ENCODE measurements at regions of chr2 and their contacts with region 1.

Region 1: GRCh38 chr2:26002632-26003310 is 20.5 kb upstream of the KIF3C start:
- DNase-seq: no peak
- CTCF ChIP-seq: no peak

Region 2: DNA sequence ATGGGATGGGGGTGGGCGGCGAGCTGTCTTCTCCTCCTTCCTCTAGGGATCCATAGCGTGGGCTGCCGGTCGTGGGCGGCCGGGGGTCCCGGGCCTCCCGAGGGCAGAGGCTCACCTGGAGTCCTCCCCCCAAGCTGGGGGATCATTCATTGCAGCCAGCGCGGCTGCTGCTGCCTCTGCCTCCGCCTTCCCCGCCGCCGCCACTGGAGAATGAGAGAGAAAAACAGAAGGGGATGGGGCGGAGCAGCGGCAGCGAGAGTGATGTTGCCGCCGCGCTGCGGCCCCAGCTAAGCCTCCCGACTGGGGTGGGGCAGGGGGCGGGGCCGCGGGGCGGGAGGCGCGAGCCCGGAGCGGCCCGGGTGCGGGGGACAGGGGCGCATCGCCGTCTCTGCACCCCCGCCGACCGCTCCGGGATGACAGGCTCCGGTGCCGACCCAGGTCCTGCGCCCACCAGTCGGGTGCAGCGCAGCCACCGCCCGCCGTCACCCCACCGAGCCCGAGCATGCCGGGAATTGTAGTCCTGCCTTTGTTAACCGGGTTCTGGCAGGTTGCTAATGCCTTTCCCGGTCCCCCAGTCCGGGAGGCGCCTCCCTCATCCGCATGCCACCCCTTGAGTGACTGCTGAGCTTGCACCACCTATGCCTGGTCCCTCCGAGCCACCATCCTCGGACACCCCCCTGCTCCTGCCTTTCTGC is 20.4 kb before region 1 on chr2 and contains the start of gene KIF3C:
- CTCF ChIA-PET with region 1: interaction called, 4 read pairs
- POLR2A ChIA-PET with region 1: interaction called, 11 read pairs
- DNase-seq: peak; percentile 83
- CTCF ChIP-seq: no peak

Region 3: DNA sequence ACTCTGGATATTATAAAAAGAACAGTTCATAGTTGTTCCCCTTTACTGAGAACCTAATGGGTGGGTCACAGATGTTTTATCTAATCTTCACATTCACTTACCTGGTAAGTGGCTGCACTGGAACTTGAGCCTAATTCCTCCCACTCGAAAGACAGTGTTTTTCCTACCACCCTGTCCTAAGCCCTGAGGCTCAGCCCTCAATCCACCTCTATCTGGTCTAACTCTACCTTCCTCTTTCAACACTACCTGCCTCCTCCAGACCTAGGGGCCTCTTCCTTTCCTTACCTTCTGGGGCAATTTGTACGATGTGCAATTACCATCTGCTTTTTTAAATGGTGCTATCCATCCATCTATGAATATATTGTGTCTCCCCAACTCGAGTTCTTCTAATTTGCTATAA is 10.8 kb before region 1 on chr2:
- CTCF ChIA-PET with region 1: interaction called, 19 read pairs
- POLR2A ChIA-PET with region 1: interaction called, 7 read pairs
- DNase-seq: no peak
- CTCF ChIP-seq: no peak

Region 4: GRCh38 chr2:26095758-26096157 is 93.0 kb after region 1 on chr2:
- CTCF ChIA-PET with region 1: no interaction called
- POLR2A ChIA-PET with region 1: no interaction called
- DNase-seq: no peak
- CTCF ChIP-seq: no peak

Measured in GM10248 (cell line).